ENCODE measurements at regions of chr9 and their contacts with region 1.

Region 1: DNA sequence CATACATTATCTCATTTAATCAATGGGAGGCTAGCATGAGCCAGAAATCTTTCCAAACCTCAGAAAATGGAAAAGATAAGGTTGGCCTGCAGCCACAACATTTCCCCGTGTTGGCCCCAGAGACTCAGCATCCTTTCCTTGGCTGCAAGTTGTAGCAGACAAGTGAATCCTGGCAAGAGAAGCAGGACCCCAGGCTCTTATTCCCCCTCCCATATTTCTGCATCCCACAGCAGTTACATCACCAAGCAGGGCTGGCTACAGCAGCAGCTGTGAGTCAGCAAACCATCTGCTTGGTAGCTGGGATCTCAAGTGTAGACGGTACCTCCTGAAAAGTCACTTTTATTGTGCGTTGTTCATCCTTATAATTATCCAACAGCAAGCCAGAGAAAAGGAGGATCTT is 212.4 kb downstream of the GNA14 start:
- DNase-seq: no peak
- ATAC-seq: no peak
- H3K4me3 ChIP-seq: no peak overlapping the region
- H3K27ac ChIP-seq: no peak overlapping the region
- H3K4me1 ChIP-seq: no peaks in the 10 kb centered on the region
- H3K27me3 ChIP-seq: no peaks in the 10 kb centered on the region
- CTCF ChIP-seq: no peak

Region 2: GRCh38 chr9:77648234-77649120 is 212.8 kb after region 1 on chr9 and contains the start of gene GNA14:
- intact Hi-C with region 1: loop called (anchors 5 kb)
- DNase-seq: peak; percentile 73
- ATAC-seq: peak; percentile 77 to 83
- H3K4me3 ChIP-seq: peak within 1 kb of the TSS; percentile 69
- H3K27ac ChIP-seq: peak within 1 kb of the TSS; percentile 76
- H3K4me1 ChIP-seq: peaks cover 20% of the 10 kb centered on the region
- H3K27me3 ChIP-seq: peaks cover 16% of the 10 kb centered on the region
- CTCF ChIP-seq: no peak
- total RNA-seq, gene GNA14: 15.6 TPM